Caki2 (cell line): ENCODE measurements at regions of chr15 and their contacts with region 1.

Region 1: GRCh38 chr15:32659340-32660155 is 18.0 kb downstream of the SCG5 start:
- DNase-seq: peak; percentile 85

Region 2: GRCh38 chr15:32994810-32995424 is 335.4 kb after region 1 on chr15:
- in situ Hi-C with region 1: loop called (anchors 10 kb)
- DNase-seq: peak; percentile 39